ENCODE measurements at regions of chr1 and their contacts with region 1.

Region 1: DNA sequence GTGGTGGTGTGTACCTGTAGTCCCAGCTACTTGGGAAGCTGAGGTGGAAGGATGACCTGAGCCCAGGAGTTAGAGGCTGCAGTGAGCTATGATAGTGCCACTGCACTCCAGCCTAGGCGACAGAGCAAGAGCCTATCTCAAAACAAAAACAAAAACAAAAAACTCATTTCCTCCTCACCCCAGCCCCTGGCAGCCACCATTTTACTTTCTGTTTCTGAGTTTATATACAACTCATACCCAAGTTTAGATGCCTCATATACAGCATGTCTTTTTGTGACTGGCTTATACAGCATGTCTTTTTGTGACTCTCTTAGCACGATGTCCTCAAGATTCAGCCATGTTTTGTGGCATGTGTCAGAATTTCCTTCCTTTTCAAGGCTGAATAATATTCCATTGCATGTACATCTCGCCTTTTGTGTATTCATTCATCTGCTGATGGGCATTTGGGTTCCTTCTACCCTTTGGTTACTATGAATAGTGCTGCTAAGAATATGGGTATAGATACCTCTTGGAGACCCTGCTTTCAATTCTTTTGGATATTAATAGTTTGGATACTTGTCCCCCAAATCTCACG is 14.7 kb downstream of the COA7 start:
- DNase-seq: no peak
- ATAC-seq: no peak
- H3K4me3 Mint-ChIP-seq: no peak overlapping the region
- H3K27ac Mint-ChIP-seq: no peak overlapping the region
- H3K4me1 Mint-ChIP-seq: peaks cover 44% of the 10 kb centered on the region
- H3K27me3 Mint-ChIP-seq: no peaks in the 10 kb centered on the region
- CTCF ChIP-seq: no peak

Region 2: GRCh38 chr1:51956528-51957509 is 726.6 kb before region 1 on chr1:
- CTCF ChIA-PET with region 1: no interaction called
- POLR2A ChIA-PET with region 1: no interaction called
- intact Hi-C with region 1: no loop called
- DNase-seq: no peak
- ATAC-seq: no peak
- H3K4me3 Mint-ChIP-seq: no peak overlapping the region
- H3K27ac Mint-ChIP-seq: no peak overlapping the region
- H3K4me1 Mint-ChIP-seq: peaks cover 21% of the 10 kb centered on the region
- H3K27me3 Mint-ChIP-seq: peaks cover 4% of the 10 kb centered on the region
- CTCF ChIP-seq: no peak

Region 3: DNA sequence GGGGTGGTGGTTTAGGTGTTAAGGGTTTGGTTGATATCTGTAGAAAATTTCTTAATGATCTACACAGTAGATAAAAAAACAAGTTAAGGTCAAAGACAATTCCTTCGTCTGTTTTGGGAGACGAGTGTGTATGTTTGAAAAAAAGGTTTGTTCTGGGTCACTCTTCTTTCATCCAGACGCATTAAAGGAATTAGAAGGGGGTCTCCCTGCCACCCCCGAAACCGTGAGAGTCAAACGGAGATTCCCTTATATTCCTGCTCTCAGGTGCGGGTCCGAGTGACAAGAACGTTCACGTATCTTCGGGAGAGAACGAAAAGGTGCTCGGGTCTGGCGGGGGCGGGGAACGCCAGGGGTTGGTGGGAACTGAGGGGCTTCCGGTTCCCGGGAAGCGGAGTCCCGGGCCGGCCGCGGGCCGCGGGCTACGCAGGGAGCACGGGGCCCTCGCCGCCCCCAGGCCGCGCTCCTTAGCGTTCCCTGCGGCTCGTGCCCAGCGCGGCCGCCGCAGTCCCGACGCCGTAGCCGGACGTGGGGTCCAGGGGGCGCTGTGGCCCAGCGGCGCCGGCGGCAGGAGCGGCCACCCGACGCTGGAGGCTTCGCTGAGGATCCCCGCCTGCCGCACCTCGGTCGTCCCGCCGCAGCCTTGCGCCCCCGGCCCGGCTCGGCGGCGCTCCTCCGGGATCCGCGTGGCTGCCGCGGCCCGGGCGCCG is 541.8 kb before region 1 on chr1 and contains the start of gene ZFYVE9:
- CTCF ChIA-PET with region 1: no interaction called
- POLR2A ChIA-PET with region 1: no interaction called
- intact Hi-C with region 1: loop called (anchors 5 kb)
- DNase-seq: peak; percentile 77
- ATAC-seq: peak; percentile 84
- H3K4me3 Mint-ChIP-seq: peak within 1 kb of the TSS; percentile 81
- H3K27ac Mint-ChIP-seq: peak within 1 kb of the TSS; percentile 9
- H3K4me1 Mint-ChIP-seq: peaks cover 28% of the 10 kb centered on the region
- H3K27me3 Mint-ChIP-seq: peaks cover 18% of the 10 kb centered on the region
- CTCF ChIP-seq: no peak
- total RNA-seq, gene ZFYVE9: 3.2 and 3.3 TPM in 2 replicates

Region 4: GRCh38 chr1:52404116-52404986 is 279.1 kb before region 1 on chr1 and contains the starts of genes ORC1 and PRPF38A:
- CTCF ChIA-PET with region 1: interaction called, 10 read pairs
- POLR2A ChIA-PET with region 1: no interaction called
- intact Hi-C with region 1: loop called (anchors 1 kb)
- DNase-seq: peak; percentile 88
- ATAC-seq: peak; percentile 95
- H3K4me3 Mint-ChIP-seq: peak within 1 kb of the TSS; percentile 99
- H3K27ac Mint-ChIP-seq: peak within 1 kb of the TSS; percentile 95
- H3K4me1 Mint-ChIP-seq: peaks cover 32% of the 10 kb centered on the region
- H3K27me3 Mint-ChIP-seq: no peaks in the 10 kb centered on the region
- CTCF ChIP-seq: no peak
- total RNA-seq, gene ORC1: 3.2 TPM in 2 replicates
- total RNA-seq, gene PRPF38A: 75.6 and 78.4 TPM in 2 replicates

Region 5: GRCh38 chr1:52474807-52475206 is 208.6 kb before region 1 on chr1:
- CTCF ChIA-PET with region 1: interaction called, 4 read pairs
- POLR2A ChIA-PET with region 1: no interaction called
- intact Hi-C with region 1: loop called (anchors 10 kb)
- DNase-seq: no peak
- ATAC-seq: no peak
- H3K4me3 Mint-ChIP-seq: no peak overlapping the region
- H3K27ac Mint-ChIP-seq: no peak overlapping the region
- H3K4me1 Mint-ChIP-seq: peaks cover 2% of the 10 kb centered on the region
- H3K27me3 Mint-ChIP-seq: no peaks in the 10 kb centered on the region
- CTCF ChIP-seq: no peak

Region 6: DNA sequence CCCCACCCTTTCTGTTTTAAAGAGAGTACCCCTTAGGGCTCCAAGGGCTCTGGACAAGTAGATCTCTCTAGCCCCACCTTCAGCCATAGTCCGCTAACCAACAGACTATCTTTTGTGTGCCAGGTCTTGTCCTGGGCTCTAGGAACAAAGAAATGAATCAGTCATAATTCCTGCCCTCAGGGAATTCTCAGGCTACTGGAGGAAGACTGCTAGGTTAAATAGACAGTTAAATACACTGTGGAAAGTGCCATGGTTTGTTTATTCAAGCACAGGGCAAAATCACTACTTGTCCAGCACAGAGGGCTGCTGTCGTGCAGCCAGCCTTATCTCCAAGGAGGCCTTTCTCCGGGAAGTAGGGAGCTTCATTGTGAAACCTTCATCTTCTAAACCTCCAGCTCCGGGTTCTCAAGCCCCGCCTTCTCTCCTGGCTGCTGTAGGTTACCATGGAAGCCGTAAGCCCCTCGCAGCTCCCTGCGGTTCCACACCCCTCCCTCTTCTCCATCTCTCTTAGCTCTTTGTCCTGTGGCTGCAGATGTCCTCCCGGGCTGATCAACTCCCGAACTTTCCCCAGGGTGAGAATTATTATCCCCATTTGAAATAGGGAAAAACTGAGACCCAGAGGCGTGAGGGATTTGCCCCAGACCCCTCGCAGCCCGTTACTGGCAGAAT is 20.7 kb before region 1 on chr1:
- CTCF ChIA-PET with region 1: interaction called, 6 read pairs
- POLR2A ChIA-PET with region 1: interaction called, 3 read pairs
- intact Hi-C with region 1: loop called (anchors 2 kb)
- DNase-seq: no peak
- ATAC-seq: no peak
- H3K4me3 Mint-ChIP-seq: no peak overlapping the region
- H3K27ac Mint-ChIP-seq: peak overlapping the region; percentile 61
- H3K4me1 Mint-ChIP-seq: peaks cover 26% of the 10 kb centered on the region
- H3K27me3 Mint-ChIP-seq: no peaks in the 10 kb centered on the region
- CTCF ChIP-seq: no peak

Region 7: GRCh38 chr1:52825868-52826267 is 142.4 kb after region 1 on chr1:
- CTCF ChIA-PET with region 1: no interaction called
- POLR2A ChIA-PET with region 1: no interaction called
- intact Hi-C with region 1: no loop called
- DNase-seq: no peak
- ATAC-seq: no peak
- H3K4me3 Mint-ChIP-seq: no peak overlapping the region
- H3K27ac Mint-ChIP-seq: no peak overlapping the region
- H3K4me1 Mint-ChIP-seq: no peaks in the 10 kb centered on the region
- H3K27me3 Mint-ChIP-seq: no peaks in the 10 kb centered on the region
- CTCF ChIP-seq: no peak

Measured in activated B cell treated with CpG ODN at 0.5 μM for 24 hours (primary cell).